Activated naive CD4-positive, alpha-beta T cell treated with anti-CD3 and anti-CD28 coated beads, Interleukin-2, amount 10 ng/mL, durations not matched to agents 7 days and 5 days (primary cell): ENCODE measurements at regions of chr17 and their contacts with region 1.

Region 1: GRCh38 chr17:17890773-17891759 is 54.3 kb upstream of the SREBF1 start:
- DNase-seq: peak; percentile 70
- H3K4me3 Mint-ChIP-seq: no peak overlapping the region
- H3K27ac Mint-ChIP-seq: peak overlapping the region; percentile 78
- H3K4me1 Mint-ChIP-seq: peaks cover 7% of the 10 kb centered on the region
- H3K27me3 Mint-ChIP-seq: no peaks in the 10 kb centered on the region

Region 2: DNA sequence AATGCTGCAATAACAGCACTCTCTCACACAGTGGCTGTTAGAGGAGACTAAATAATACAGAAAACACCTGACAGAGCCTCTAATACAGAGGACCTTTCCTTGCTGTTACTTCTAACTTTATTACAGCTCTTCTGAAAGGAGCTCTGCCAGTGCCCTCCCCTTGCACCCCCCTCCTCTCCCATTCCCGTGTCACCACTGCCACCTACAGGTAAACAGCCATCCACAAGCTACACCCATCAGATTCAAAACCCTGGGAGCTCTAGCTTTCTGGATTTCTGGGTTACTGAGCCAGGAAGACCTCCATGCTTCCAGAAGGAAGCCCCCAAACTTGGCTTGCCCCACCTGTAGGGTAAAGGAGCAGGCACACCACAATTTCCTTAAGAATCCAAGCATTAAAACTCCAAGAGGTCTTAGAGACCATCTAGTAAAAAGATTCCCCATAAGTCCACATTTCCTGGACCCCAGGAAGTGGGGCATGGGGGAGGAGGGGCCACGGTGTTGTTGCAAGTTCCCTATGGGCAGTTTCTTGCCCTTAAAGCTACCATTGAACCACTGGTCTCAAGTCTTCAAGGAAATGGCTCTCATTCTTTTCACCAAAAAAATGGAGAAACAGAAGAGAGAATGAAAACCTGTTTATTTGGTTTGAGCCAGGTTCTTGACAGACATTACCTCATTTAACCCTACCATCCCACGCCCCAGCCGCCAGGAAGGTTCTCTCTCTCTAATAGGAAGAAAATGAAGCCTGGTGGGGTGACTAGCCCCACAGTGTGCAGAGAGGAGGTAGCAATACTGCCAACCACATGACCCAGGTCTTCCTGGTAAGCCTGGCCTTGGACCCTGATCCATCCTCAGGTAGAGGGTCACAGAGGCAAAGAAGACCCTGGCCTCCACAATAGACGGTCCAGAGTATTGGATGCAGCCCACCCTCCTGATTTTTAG is 28.4 kb after region 1 on chr17:
- CTCF ChIA-PET with region 1: interaction called, 13 read pairs
- DNase-seq: peak; percentile 83
- H3K4me3 Mint-ChIP-seq: no peak overlapping the region
- H3K27ac Mint-ChIP-seq: no peak overlapping the region
- H3K4me1 Mint-ChIP-seq: peaks cover 16% of the 10 kb centered on the region
- H3K27me3 Mint-ChIP-seq: no peaks in the 10 kb centered on the region